Kidney (tissue), 22 donors: ENCODE measurements at regions of chr7 and their contacts with region 1.

Region 1: GRCh38 chr7:142771353-142771723 is 568 bp downstream of the PRSS2 start:
- DNase-seq: peak in 3 of 5 donors; percentile 19 to 66 (median 53)
- H3K4me3 ChIP-seq: no peak overlapping the region
- H3K27ac ChIP-seq: no peak overlapping the region
- H3K4me1 ChIP-seq: peaks cover 0 to 5% (median 0%) of the 10 kb centered on the region in 3 donors
- H3K27me3 ChIP-seq: no peaks in the 10 kb centered on the region
- CTCF ChIP-seq: no peak

Region 2: DNA sequence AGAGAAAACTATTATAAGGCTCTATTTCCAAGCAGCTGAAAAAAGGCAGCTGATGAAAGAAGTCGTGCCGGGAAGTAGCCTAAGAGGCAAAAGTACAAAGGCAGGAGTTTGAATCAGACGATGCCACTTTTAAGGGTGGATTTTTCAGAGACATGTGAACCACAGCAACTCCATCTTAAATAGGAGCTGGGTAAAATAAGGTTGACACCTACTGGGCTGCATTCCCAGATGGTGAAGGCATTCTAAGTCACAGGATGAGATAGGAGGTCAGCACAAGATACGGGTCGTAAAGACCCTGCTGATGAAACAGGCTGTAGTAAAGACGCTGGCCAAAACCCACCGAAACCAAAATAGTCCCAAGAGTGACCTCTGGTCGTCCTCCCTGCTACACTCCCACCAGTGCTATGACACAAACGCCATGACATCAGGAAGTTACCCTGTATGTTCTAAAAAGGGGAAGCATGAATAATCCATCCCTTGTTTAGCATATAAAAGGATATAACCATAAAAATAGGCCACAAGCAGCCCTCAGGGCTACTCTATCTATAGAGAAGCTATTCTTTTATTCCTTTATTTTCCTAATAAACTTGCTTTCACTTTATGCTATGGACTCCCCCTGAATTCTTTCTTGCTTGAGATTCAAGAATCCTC is 67.6 kb before region 1 on chr7:
- intact Hi-C with region 1: loop called (anchors 10 kb)
- DNase-seq: no peak
- H3K4me3 ChIP-seq: no peak overlapping the region
- H3K27ac ChIP-seq: no peak overlapping the region
- H3K4me1 ChIP-seq: no peaks in the 10 kb centered on the region
- H3K27me3 ChIP-seq: no peaks in the 10 kb centered on the region
- CTCF ChIP-seq: no peak

Region 3: DNA sequence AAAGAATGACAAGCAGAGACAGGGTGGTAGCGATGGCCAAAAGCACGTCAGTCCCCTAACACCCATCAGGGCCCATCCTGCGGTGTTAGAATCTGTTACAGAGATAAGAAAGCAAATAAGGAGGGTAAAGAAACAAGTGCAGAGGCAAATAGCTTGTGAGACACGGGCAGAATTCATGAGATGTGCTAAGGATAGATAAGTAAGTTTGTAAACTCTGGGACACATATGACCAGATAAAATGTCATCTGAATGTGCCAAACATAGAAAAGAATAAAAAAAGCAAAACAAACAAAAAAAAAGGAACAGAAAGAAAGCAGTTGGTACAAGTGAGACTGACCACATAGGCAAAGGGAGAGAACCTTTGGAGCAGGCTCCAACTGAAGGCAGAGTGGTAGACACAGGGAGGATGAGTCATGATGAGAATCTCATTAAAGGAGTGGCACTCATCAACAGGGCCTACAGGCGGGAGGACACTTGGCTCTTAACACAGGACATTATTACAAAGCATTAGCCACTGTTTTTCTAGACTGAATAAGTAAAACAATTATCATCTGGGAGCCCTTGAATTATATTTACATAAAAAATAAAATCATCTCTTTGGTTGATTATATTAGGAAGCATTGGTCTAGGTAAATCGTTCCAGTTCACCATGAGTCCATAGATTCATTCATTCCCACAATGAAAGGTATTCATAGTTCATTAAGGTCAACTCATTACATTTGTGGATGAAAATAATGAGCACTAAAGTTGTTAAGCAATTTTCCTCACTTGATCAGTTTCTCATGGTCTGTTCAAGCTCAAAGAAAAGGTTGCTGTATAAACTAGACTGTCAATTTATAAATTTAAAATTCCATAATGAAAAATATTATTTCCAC is 62.1 kb after region 1 on chr7:
- intact Hi-C with region 1: no loop called
- DNase-seq: no peak
- H3K4me3 ChIP-seq: no peak overlapping the region
- H3K27ac ChIP-seq: no peak overlapping the region
- H3K4me1 ChIP-seq: no peaks in the 10 kb centered on the region
- H3K27me3 ChIP-seq: no peaks in the 10 kb centered on the region
- CTCF ChIP-seq: no peak

Region 4: DNA sequence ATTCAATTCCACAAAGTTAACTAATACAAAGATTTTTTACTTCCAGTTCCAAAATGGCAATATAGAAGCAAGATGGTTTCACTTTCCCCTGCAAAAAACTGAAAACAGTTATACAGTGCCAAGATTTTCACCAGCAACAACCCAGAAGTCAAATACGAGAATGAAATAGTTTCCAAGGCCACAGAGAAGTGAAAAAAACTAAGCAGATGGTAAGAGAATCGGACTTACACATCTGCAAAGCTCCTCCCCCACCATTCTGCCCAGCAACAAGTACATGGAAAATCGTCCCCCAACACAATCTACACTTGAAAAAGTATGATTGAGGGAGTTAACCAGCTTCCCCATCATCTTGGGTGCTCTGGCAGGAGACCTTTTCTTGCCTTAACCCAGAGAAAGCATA is 221.1 kb after region 1 on chr7:
- intact Hi-C with region 1: no loop called
- DNase-seq: no peak
- H3K4me3 ChIP-seq: no peak overlapping the region
- H3K27ac ChIP-seq: no peak overlapping the region
- H3K4me1 ChIP-seq: no peaks in the 10 kb centered on the region
- H3K27me3 ChIP-seq: no peaks in the 10 kb centered on the region
- CTCF ChIP-seq: no peak